Cardiac septum (tissue), 1 donor: ENCODE measurements at regions of chr3 and their contacts with region 1.

Region 1: DNA sequence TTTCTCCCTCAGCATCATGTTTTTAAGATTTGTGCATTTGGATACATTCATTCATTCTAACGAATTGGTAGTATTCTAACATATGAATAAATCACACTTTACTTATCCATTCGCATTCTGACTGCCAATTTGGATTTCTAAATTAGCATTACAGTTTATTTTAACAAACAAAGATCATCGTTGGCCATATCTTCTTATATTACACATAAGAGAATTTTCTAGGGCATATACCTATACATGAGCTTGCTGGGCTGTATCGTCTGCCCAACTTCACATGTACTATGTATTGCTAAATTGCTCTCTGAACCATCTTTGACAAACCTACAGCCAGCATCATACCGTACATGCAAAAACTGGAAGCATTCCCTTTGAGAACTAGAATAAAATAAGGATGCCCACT is 265.8 kb upstream of the PPP2R3A start:
- DNase-seq: no peak

Region 2: GRCh38 chr3:134594331-134594741 is 1105.4 kb before region 1 on chr3:
- intact Hi-C with region 1: loop called (anchors 5 kb)
- DNase-seq: no peak